ENCODE measurements at regions of chr1 and their contacts with region 1.

Region 1: DNA sequence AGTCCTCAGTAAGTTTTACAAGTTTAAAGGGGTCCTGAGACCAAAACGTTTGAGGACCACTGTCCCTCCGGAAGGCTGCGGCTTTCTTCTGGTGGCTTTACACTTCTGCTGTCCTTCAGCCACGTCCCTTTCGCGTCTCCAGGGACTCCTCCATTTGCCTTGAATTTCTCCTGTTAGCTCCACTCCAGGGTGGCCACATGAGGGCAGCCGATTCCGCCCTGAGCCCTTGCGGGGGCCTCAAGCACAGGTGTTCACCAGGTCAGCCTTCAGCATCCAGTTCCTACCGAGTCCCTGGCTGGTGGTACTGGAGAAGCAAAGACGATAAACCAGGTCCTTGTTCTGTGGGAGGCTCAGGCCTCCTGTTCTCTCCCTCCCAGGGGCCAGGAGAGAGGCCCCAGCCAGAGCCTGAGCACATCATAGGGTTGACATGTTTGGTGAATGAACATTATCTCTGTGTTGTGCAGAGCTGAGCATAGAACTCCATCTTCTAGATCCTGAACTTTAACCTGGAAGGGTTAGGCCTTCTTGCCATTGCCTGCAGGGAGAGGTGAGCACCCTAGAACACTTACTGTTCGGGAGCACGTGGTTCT is 27.4 kb upstream of the COQ8A start:
- DNase-seq: peak; percentile 12
- ATAC-seq: peak; percentile 94
- H3K4me3 ChIP-seq: no peak overlapping the region
- H3K27ac ChIP-seq: no peak overlapping the region
- H3K4me1 ChIP-seq: no peaks in the 10 kb centered on the region
- H3K27me3 ChIP-seq: no peaks in the 10 kb centered on the region
- CTCF ChIP-seq: peak; percentile 90

Region 2: GRCh38 chr1:226901421-226901820 is 11.3 kb before region 1 on chr1:
- CTCF ChIA-PET with region 1: no interaction called
- POLR2A ChIA-PET with region 1: interaction called, 11 read pairs
- in situ Hi-C with region 1: no loop called
- intact Hi-C with region 1: no loop called
- DNase-seq: no peak
- ATAC-seq: no peak
- H3K4me3 ChIP-seq: no peak overlapping the region
- H3K27ac ChIP-seq: no peak overlapping the region
- H3K4me1 ChIP-seq: no peaks in the 10 kb centered on the region
- H3K27me3 ChIP-seq: no peaks in the 10 kb centered on the region
- CTCF ChIP-seq: no peak